ENCODE measurements at regions of chr5 and their contacts with region 1.

Region 1: DNA sequence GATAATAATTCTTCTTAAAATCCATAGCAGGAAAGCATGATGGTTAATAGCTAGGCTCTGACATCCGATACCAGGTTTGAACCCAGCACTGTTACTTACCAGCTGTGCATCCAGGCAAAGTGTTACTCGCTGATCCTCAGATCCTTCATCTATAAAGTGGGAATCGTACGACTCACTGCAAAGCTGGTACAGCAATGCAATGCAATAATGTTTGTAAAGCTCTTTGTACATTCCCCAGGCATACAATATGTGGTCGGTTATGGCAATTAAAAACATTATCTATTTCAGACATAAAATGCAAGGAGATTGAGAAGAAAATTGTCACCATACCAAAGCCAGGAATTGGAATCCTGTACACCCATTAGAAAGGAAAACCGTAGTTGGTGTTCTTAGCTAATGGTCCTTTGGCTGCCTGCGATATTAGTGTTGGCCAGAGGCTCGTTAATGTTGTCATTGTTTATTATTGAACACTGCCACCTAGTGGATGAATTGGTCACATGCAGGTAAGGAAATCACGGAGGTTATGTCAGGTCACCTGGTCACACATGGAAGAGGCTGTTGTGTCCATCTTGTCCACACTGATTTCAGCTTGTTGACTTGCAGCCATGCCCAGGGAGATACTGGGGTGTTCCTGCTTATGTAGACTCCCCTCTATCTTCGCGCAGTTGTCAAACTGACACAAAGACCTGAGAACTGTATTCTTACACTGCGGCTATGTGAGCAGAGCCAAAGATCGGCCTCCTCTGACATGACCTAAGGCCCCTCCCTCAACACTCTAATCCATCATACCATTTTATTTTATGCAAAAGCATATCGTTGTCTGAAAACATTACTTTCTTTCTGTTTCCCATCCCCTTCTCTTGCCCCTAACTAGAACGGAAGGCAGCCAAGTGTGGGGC is 87.5 kb upstream of the PPP2R2B start:
- DNase-seq: peak; percentile 61
- ATAC-seq: peak; percentile 64
- H3K4me3 ChIP-seq: no peak overlapping the region
- H3K4me3 Mint-ChIP-seq: no peak overlapping the region
- H3K27ac ChIP-seq: no peak overlapping the region
- H3K27ac Mint-ChIP-seq: no peak overlapping the region
- H3K4me1 ChIP-seq: no peaks in the 10 kb centered on the region
- H3K4me1 Mint-ChIP-seq: no peaks in the 10 kb centered on the region
- H3K27me3 ChIP-seq: no peaks in the 10 kb centered on the region
- H3K27me3 Mint-ChIP-seq: no peaks in the 10 kb centered on the region
- CTCF ChIP-seq: peak; percentile 81

Region 2: GRCh38 chr5:146541958-146542849 is 423.8 kb before region 1 on chr5:
- CTCF ChIA-PET with region 1: interaction called, 6 read pairs
- POLR2A ChIA-PET with region 1: no interaction called
- intact Hi-C with region 1: loop called (anchors 1 kb)
- DNase-seq: peak; percentile 54
- ATAC-seq: peak; percentile 66
- H3K4me3 ChIP-seq: no peak overlapping the region
- H3K4me3 Mint-ChIP-seq: no peak overlapping the region
- H3K27ac ChIP-seq: no peak overlapping the region
- H3K27ac Mint-ChIP-seq: no peak overlapping the region
- H3K4me1 ChIP-seq: no peaks in the 10 kb centered on the region
- H3K4me1 Mint-ChIP-seq: peaks cover 2% of the 10 kb centered on the region
- H3K27me3 ChIP-seq: no peaks in the 10 kb centered on the region
- H3K27me3 Mint-ChIP-seq: peaks cover 3% of the 10 kb centered on the region
- CTCF ChIP-seq: peak; percentile 89

Region 3: GRCh38 chr5:146662229-146662628 is 303.8 kb before region 1 on chr5:
- CTCF ChIA-PET with region 1: interaction called, 5 read pairs
- POLR2A ChIA-PET with region 1: no interaction called
- intact Hi-C with region 1: loop called (anchors 5 kb)
- DNase-seq: no peak
- ATAC-seq: no peak
- H3K4me3 ChIP-seq: no peak overlapping the region
- H3K4me3 Mint-ChIP-seq: no peak overlapping the region
- H3K27ac ChIP-seq: no peak overlapping the region
- H3K27ac Mint-ChIP-seq: no peak overlapping the region
- H3K4me1 ChIP-seq: no peaks in the 10 kb centered on the region
- H3K4me1 Mint-ChIP-seq: no peaks in the 10 kb centered on the region
- H3K27me3 ChIP-seq: no peaks in the 10 kb centered on the region
- H3K27me3 Mint-ChIP-seq: peaks cover 4% of the 10 kb centered on the region
- CTCF ChIP-seq: peak; percentile 76

Region 4: DNA sequence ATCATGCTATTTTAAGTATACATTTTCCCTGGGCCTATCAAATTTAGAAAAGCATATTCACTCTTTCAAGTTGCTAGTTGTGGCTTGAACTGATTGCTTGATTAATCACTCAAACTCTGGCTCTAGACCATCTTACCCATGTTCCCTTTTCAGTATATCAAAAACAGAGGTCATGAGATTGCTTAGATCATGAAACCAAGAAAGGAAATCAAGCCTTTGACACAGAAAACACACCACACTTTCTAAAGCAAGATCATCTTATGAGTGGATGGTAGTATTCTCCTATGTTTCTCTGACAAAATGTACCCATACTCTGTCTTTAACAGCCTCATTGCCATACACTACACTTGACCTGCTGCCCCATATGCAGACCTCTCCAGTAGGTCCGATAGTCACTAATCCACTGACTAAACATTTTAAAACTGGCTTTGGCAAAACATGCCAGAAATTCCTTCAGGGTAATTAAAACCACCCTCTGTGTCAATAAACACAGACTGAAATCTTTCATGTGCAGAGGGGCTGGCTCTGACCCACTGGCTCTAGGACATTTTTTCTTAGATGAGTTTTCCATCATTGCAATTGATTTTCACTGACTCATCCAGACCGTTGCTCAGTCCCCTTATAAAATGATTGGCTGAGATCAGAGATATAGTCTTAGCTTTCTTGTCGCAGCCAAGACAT is 105.7 kb before region 1 on chr5:
- CTCF ChIA-PET with region 1: no interaction called
- POLR2A ChIA-PET with region 1: no interaction called
- intact Hi-C with region 1: no loop called
- DNase-seq: no peak
- ATAC-seq: no peak
- H3K4me3 ChIP-seq: no peak overlapping the region
- H3K4me3 Mint-ChIP-seq: no peak overlapping the region
- H3K27ac ChIP-seq: no peak overlapping the region
- H3K27ac Mint-ChIP-seq: no peak overlapping the region
- H3K4me1 ChIP-seq: no peaks in the 10 kb centered on the region
- H3K4me1 Mint-ChIP-seq: no peaks in the 10 kb centered on the region
- H3K27me3 ChIP-seq: no peaks in the 10 kb centered on the region
- H3K27me3 Mint-ChIP-seq: no peaks in the 10 kb centered on the region
- CTCF ChIP-seq: no peak

Measured in B cell (primary cell).